Right ventricle myocardium inferior (tissue), 1 donor: ENCODE measurements at regions of chr1 and their contacts with region 1.

Region 1: GRCh38 chr1:47997289-47998200 is at the start of gene TRABD2B:
- DNase-seq: peak; percentile 89
- ATAC-seq: peak; percentile 80
- total RNA-seq, gene TRABD2B: 0.57 TPM

Region 2: DNA sequence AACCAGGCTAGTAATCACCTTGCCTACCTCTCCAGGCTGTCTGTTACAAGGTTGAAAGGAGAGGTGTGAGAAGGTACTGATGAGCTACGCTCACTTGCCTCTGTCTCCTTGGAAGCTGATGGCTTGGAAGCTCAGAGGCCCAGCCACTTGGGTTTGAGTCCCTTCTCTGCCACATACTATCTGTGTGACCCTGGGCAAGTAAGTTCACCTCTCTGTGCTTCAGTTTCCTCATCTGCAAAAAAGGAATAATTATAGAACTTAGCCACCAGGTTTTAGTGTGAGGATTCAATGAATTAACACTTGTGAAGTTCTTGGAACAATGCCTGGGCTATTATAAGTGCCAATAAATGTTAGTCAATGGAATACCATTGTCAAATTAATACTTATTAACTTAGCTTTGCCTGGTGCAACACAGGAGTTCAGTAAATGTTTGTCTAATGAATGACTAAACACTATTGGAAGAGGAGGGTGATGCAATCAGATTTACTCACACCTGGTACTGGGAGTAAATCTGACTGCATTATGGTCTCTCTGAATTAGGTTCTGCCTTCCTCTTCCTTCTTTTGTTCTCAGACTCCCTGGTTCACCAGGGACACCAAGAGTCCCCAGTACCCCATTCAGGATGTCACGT is 55.8 kb before region 1 on chr1:
- intact Hi-C with region 1: loop called (anchors 5 kb)
- DNase-seq: no peak
- ATAC-seq: no peak

Region 3: GRCh38 chr1:48061162-48062136 is 63.9 kb after region 1 on chr1:
- intact Hi-C with region 1: loop called (anchors 1 kb)
- DNase-seq: no peak
- ATAC-seq: peak; percentile 65